ENCODE measurements at regions of chr6 and their contacts with region 1.

Region 1: GRCh38 chr6:134870677-134871498 is 79.0 kb downstream of the ALDH8A1 start:
- DNase-seq: no peak
- ATAC-seq: no peak
- H3K4me3 ChIP-seq: no peak overlapping the region
- H3K27ac ChIP-seq: no peak overlapping the region
- H3K4me1 ChIP-seq: peaks cover 0 to 6% (median 0%) of the 10 kb centered on the region in 4 donors
- H3K27me3 ChIP-seq: no peaks in the 10 kb centered on the region
- CTCF ChIP-seq: no peak
- POLR2A ChIP-seq: no peak

Region 2: GRCh38 chr6:134161036-134161435 is 709.9 kb before region 1 on chr6:
- intact Hi-C with region 1: loop called in 1 of 2 experiments (anchors 5 kb)
- DNase-seq: no peak
- ATAC-seq: peak in 1 of 4 donors; percentile 58
- H3K4me3 ChIP-seq: no peak overlapping the region
- H3K27ac ChIP-seq: no peak overlapping the region
- H3K4me1 ChIP-seq: no peaks in the 10 kb centered on the region
- H3K27me3 ChIP-seq: no peaks in the 10 kb centered on the region
- CTCF ChIP-seq: no peak
- POLR2A ChIP-seq: no peak

Region 3: GRCh38 chr6:134822920-134823709 is 47.8 kb before region 1 on chr6:
- intact Hi-C with region 1: loop called (anchors 10 kb)
- DNase-seq: peak in 2 of 3 donors; percentile 31 to 58
- ATAC-seq: peak; percentile 83 to 92 (median 83)
- H3K4me3 ChIP-seq: no peak overlapping the region
- H3K27ac ChIP-seq: peak overlapping the region; percentile 0 to 67 (median 16)
- H3K4me1 ChIP-seq: peaks cover 0 to 38% (median 3%) of the 10 kb centered on the region in 4 donors
- H3K27me3 ChIP-seq: no peaks in the 10 kb centered on the region
- CTCF ChIP-seq: peak; percentile 75 to 98 (median 82)
- POLR2A ChIP-seq: no peak